ENCODE measurements at regions of chr6 and their contacts with region 1.

Region 1: DNA sequence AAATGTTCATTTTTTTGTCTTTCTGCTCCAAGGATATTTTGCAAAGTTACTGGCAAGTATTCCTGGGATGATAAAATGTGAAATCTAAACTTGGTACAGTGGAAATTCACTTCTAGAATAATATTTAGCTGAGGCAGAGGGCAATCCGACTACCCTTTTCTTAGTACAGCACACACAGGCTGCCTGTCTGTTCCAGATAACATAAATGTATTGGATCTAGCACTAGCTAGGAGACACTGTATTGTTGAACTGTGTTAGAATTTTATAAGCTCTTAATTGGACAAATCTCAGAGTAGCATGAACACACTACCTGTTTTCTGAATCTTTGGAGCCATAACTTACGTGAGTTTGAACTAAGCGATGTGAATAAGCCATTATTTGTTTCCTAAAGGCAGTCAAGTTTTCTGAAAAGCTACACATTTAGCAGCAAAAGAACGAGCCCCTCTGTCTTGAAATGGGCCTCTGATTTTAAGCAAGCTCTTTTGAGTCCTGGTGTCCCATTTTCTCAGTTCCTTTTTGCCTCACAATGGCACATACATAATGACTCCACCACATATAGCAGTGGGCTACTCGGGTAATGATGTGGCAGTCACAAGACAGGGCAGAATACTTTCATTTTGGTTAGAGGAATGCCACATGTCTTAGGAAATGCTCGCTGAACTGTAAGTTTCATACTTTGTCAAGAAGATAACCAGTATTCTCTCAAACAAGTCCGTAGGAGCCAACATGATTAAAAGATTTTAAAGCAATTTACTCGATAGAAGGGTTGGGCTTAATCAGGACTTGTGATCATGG is 116.5 kb upstream of the ESR1 start:
- DNase-seq: peak; percentile 79
- H3K4me3 Mint-ChIP-seq: peak overlapping the region; percentile 76
- H3K27ac Mint-ChIP-seq: peak overlapping the region; percentile 73
- H3K4me1 Mint-ChIP-seq: peaks cover 18% of the 10 kb centered on the region
- H3K27me3 Mint-ChIP-seq: peaks cover 17% of the 10 kb centered on the region

Region 2: GRCh38 chr6:151702851-151703611 is 12.1 kb after region 1 on chr6:
- intact Hi-C with region 1: loop called (anchors 1 kb)
- DNase-seq: no peak
- H3K4me3 Mint-ChIP-seq: no peak overlapping the region
- H3K27ac Mint-ChIP-seq: peak overlapping the region; percentile 72
- H3K4me1 Mint-ChIP-seq: peaks cover 27% of the 10 kb centered on the region
- H3K27me3 Mint-ChIP-seq: peaks cover 24% of the 10 kb centered on the region

Region 3: GRCh38 chr6:151723152-151723551 is 32.2 kb after region 1 on chr6:
- intact Hi-C with region 1: loop called (anchors 1 kb)
- DNase-seq: peak; percentile 79
- H3K4me3 Mint-ChIP-seq: peak overlapping the region; percentile 29
- H3K27ac Mint-ChIP-seq: peak overlapping the region; percentile 64
- H3K4me1 Mint-ChIP-seq: peaks cover 26% of the 10 kb centered on the region
- H3K27me3 Mint-ChIP-seq: peaks cover 11% of the 10 kb centered on the region

Region 4: GRCh38 chr6:151757506-151758245 is 66.7 kb after region 1 on chr6:
- intact Hi-C with region 1: loop called (anchors 1 kb)
- DNase-seq: peak; percentile 84
- H3K4me3 Mint-ChIP-seq: peak overlapping the region; percentile 67
- H3K27ac Mint-ChIP-seq: peak overlapping the region; percentile 94
- H3K4me1 Mint-ChIP-seq: peaks cover 36% of the 10 kb centered on the region
- H3K27me3 Mint-ChIP-seq: no peaks in the 10 kb centered on the region

Region 5: GRCh38 chr6:151765444-151765886 is 74.5 kb after region 1 on chr6:
- intact Hi-C with region 1: loop called (anchors 2 kb)
- DNase-seq: peak; percentile 88
- H3K4me3 Mint-ChIP-seq: no peak overlapping the region
- H3K27ac Mint-ChIP-seq: no peak overlapping the region
- H3K4me1 Mint-ChIP-seq: peaks cover 26% of the 10 kb centered on the region
- H3K27me3 Mint-ChIP-seq: peaks cover 24% of the 10 kb centered on the region

Region 6: GRCh38 chr6:151962246-151962846 is 271.4 kb after region 1 on chr6:
- intact Hi-C with region 1: loop called (anchors 5 kb)
- DNase-seq: peak; percentile 70
- H3K4me3 Mint-ChIP-seq: no peak overlapping the region
- H3K27ac Mint-ChIP-seq: peak overlapping the region; percentile 48
- H3K4me1 Mint-ChIP-seq: peaks cover 12% of the 10 kb centered on the region
- H3K27me3 Mint-ChIP-seq: peaks cover 49% of the 10 kb centered on the region

Region 7: GRCh38 chr6:152124429-152125074 is 433.6 kb after region 1 on chr6:
- intact Hi-C with region 1: loop called (anchors 2 kb)
- DNase-seq: no peak
- H3K4me3 Mint-ChIP-seq: no peak overlapping the region
- H3K27ac Mint-ChIP-seq: no peak overlapping the region
- H3K4me1 Mint-ChIP-seq: no peaks in the 10 kb centered on the region
- H3K27me3 Mint-ChIP-seq: no peaks in the 10 kb centered on the region

Region 8: DNA sequence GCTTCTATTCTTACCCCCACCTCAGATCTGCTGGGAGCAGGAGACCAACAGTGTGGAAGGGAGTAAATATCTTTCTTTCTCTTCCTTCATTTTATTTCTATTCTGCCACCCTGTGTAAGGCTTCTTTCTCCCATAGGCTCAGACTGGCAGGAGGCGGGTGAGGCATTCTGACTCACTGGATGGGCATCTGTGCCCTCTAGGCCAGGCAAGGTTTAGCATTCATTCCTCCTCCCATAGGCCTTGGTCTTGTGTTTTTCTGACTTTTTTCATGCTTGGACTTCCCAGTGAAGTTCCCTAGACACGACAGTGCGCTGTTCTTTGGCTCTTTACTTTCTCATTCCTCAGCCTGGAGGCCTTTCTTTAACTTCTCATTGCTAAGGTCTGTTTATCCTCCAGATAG is 711.0 kb after region 1 on chr6:
- intact Hi-C with region 1: no loop called
- DNase-seq: peak; percentile 30
- H3K4me3 Mint-ChIP-seq: no peak overlapping the region
- H3K27ac Mint-ChIP-seq: no peak overlapping the region
- H3K4me1 Mint-ChIP-seq: no peaks in the 10 kb centered on the region
- H3K27me3 Mint-ChIP-seq: no peaks in the 10 kb centered on the region